Activated CD4-positive, alpha-beta memory T cell treated with anti-CD3 and anti-CD28 coated beads for 36 hours (primary cell): ENCODE measurements at regions of chr7 and their contacts with region 1.

Region 1: GRCh38 chr7:44638611-44639557 is 32.5 kb downstream of the OGDH start:
- DNase-seq: peak; percentile 93
- H3K4me3 Mint-ChIP-seq: peak overlapping the region; percentile 67
- H3K27ac Mint-ChIP-seq: peak overlapping the region; percentile 100
- H3K4me1 Mint-ChIP-seq: peaks cover 80% of the 10 kb centered on the region
- H3K27me3 Mint-ChIP-seq: no peaks in the 10 kb centered on the region

Region 2: DNA sequence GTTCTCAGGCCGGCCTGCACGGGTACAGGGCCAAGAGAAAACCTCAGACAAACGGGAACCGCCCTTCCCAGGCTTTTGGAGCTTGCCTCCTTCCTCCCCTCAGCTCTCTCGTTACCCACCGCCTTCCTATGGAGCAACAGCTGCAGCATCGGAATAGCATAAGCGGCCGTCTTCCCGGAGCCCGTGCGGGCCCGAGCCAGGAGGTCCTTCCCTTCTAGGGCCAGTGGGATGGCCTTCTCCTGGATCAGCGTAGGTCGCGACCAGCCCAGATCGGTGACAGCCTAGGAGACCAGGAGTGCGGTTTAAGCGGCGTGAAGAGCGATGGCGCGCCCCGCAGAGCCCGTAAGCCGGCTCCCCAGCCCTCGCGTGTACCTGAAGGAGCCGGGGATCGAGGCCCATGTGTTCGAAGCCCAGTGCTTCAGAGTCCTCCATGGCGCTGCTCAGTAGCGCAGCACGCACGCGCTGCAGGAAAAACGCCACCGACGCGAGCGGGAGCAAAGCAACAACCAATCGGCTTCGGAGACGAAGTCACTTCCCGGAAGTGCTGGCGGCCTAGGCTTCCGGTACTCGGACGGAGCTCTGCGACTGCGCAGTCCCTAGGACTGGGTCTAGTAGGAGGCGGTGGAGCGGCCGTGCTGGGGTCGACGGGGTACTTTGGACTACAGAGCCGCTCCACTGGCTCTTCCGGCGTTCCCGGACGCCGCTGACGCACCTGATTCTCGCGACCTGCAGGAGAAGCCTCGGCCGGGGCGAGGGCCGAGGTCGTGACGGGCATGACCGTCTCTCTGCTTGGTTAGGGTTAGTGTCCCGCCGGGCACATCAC is 65.2 kb before region 1 on chr7 and contains the start of gene DDX56:
- CTCF ChIA-PET with region 1: no interaction called
- POLR2A ChIA-PET with region 1: interaction called, 15 read pairs
- intact Hi-C with region 1: no loop called
- DNase-seq: peak; percentile 97
- H3K4me3 Mint-ChIP-seq: peak within 1 kb of the TSS; percentile 92
- H3K27ac Mint-ChIP-seq: peak within 1 kb of the TSS; percentile 91
- H3K4me1 Mint-ChIP-seq: peaks cover 43% of the 10 kb centered on the region
- H3K27me3 Mint-ChIP-seq: no peaks in the 10 kb centered on the region
- total RNA-seq, gene DDX56: 84.0 to 87.0 TPM

Region 3: DNA sequence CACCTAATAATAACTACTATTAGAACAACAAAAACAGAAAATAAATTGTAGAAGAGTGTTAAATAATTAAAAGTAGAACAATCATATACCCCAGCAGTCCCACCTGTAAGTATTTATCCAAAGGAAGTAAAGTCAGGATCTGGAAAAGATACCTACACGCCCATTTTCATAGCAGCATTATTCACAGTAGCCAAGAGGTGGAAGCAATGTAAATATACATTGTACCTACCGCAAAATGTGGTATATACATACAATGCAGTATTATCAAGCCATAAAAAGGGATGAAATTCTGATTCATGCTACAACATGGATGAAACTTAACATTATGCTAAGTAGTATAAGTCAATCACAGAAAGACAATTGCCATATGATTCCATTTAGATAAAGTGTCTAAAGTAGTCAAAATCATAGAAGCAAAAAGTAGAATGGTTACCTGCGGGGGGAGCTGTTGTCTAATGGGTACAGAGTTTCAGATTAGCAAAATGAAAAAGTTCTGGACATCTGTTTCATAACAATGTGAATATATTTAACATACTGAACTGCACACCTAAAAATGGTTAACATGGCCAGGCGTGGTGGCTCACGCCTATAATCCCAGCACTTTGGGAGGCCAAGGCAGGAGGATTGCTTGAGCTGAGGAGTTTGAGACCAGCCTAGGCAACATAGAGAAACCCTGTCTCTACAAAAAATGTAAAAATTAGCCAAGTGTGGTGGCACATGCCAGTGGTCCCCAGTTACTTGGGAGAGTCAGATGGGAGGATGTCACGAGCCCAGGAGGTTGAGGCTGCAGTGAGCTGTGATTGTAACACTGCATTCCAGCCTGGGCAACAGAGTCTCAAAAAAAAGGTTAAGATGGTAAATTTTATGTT is 50.8 kb before region 1 on chr7:
- CTCF ChIA-PET with region 1: no interaction called
- POLR2A ChIA-PET with region 1: interaction called, 7 read pairs
- intact Hi-C with region 1: loop called (anchors 1 kb)
- DNase-seq: peak; percentile 73
- H3K4me3 Mint-ChIP-seq: no peak overlapping the region
- H3K27ac Mint-ChIP-seq: peak overlapping the region; percentile 33
- H3K4me1 Mint-ChIP-seq: peaks cover 8% of the 10 kb centered on the region
- H3K27me3 Mint-ChIP-seq: no peaks in the 10 kb centered on the region

Region 4: DNA sequence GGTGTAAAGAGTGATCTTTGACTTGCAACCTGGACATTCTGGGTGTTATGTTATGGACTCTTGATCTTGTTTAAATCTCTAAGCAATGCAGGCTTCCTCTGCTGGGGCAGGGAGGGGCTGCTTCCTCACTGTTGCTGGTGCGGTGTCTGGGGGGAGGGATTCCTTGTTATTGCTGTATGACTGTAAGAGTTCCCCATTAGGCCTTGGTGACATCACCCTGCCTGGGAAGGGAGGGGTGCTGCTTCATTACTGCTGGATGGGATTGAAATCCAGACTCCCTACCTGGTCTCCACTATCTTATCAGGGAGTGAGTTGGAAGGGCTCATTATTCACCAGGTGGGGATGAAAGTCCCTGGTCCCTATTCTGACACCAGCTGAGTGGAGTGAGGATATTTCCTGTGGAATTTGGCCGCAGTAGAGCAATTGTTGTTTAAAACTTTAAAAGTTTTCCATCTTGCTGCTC is 23.7 kb before region 1 on chr7:
- CTCF ChIA-PET with region 1: interaction called, 10 read pairs
- POLR2A ChIA-PET with region 1: interaction called, 34 read pairs
- intact Hi-C with region 1: loop called (anchors 1 kb)
- DNase-seq: peak; percentile 66
- H3K4me3 Mint-ChIP-seq: peak overlapping the region; percentile 1
- H3K27ac Mint-ChIP-seq: peak overlapping the region; percentile 65
- H3K4me1 Mint-ChIP-seq: peaks cover 63% of the 10 kb centered on the region
- H3K27me3 Mint-ChIP-seq: no peaks in the 10 kb centered on the region

Region 5: GRCh38 chr7:44735403-44736165 is 96.7 kb after region 1 on chr7:
- CTCF ChIA-PET with region 1: interaction called, 3 read pairs
- POLR2A ChIA-PET with region 1: interaction called, 8 read pairs
- intact Hi-C with region 1: loop called (anchors 1 kb)
- DNase-seq: peak; percentile 62
- H3K4me3 Mint-ChIP-seq: peak overlapping the region; percentile 4
- H3K27ac Mint-ChIP-seq: peak overlapping the region; percentile 73
- H3K4me1 Mint-ChIP-seq: peaks cover 19% of the 10 kb centered on the region
- H3K27me3 Mint-ChIP-seq: no peaks in the 10 kb centered on the region

Region 6: GRCh38 chr7:44797329-44798251 is 158.7 kb after region 1 on chr7:
- CTCF ChIA-PET with region 1: no interaction called
- POLR2A ChIA-PET with region 1: interaction called, 22 read pairs
- intact Hi-C with region 1: loop called (anchors 1 kb)
- DNase-seq: peak; percentile 91
- H3K4me3 Mint-ChIP-seq: peak overlapping the region; percentile 97
- H3K27ac Mint-ChIP-seq: peak overlapping the region; percentile 99
- H3K4me1 Mint-ChIP-seq: peaks cover 31% of the 10 kb centered on the region
- H3K27me3 Mint-ChIP-seq: no peaks in the 10 kb centered on the region